Ascending aorta (tissue), 2 donors: ENCODE measurements at regions of chr15 and their contacts with region 1.

Region 1: GRCh38 chr15:65530314-65531122 is at the start of gene HACD3:
- DNase-seq: peak; percentile 26 to 91
- H3K4me3 ChIP-seq: peak within 1 kb of the TSS; percentile 85 to 96
- H3K27ac ChIP-seq: peak within 1 kb of the TSS; percentile 44 to 55
- H3K4me1 ChIP-seq: peaks cover 0 to 12% of the 10 kb centered on the region in 2 donors
- H3K27me3 ChIP-seq: no peaks in the 10 kb centered on the region
- CTCF ChIP-seq: no peak
- total RNA-seq, gene HACD3: 46.2 TPM

Region 2: GRCh38 chr15:65516997-65517865 is 13.3 kb before region 1 on chr15 and contains the start of gene DPP8:
- intact Hi-C with region 1: loop called (anchors 2 kb)
- DNase-seq: peak; percentile 60 to 95
- H3K4me3 ChIP-seq: peak within 1 kb of the TSS; percentile 97 to 98
- H3K27ac ChIP-seq: peak within 1 kb of the TSS; percentile 87 to 93
- H3K4me1 ChIP-seq: peaks cover 4 to 26% of the 10 kb centered on the region in 2 donors
- H3K27me3 ChIP-seq: no peaks in the 10 kb centered on the region
- CTCF ChIP-seq: peak; percentile 81 to 96 (median 93)
- total RNA-seq, gene DPP8: 69.0 TPM